ENCODE measurements at regions of chr15 and their contacts with region 1.

Region 1: GRCh38 chr15:97598353-97598798 is 362.1 kb upstream of the ARRDC4 start:
- DNase-seq: no peak
- H3K4me3 ChIP-seq: no peak overlapping the region
- H3K27ac ChIP-seq: no peak overlapping the region
- H3K4me1 ChIP-seq: no peaks in the 10 kb centered on the region
- H3K27me3 ChIP-seq: no peaks in the 10 kb centered on the region
- CTCF ChIP-seq: no peak

Region 2: DNA sequence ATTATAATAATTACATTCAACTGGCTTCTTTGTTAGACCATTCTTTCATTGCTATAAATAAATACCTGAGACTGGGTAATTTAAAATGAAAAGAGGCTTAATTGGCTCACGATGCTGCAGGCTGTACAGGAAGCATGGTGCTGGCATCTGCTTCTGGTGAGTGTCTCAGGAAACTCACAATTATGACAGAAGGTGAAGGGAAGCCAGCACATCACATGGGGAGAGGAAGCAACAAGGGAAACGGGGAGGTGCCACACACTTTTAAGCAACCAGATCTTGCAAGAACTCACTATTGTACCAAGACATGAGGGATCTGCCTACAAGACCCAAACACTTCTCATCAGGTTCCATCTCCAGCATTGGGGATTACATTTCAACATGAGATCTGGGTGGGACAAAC is 51.0 kb before region 1 on chr15:
- CTCF ChIA-PET with region 1: no interaction called
- dilution Hi-C with region 1: loop called (anchors 5 kb)
- in situ Hi-C with region 1: no loop called
- intact Hi-C with region 1: no loop called
- DNase-seq: no peak
- H3K4me3 ChIP-seq: no peak overlapping the region
- H3K27ac ChIP-seq: no peak overlapping the region
- H3K4me1 ChIP-seq: no peaks in the 10 kb centered on the region
- H3K27me3 ChIP-seq: no peaks in the 10 kb centered on the region
- CTCF ChIP-seq: no peak

Measured in mammary epithelial cell (primary cell).